ENCODE measurements at regions of chr5 and their contacts with region 1.

Region 1: DNA sequence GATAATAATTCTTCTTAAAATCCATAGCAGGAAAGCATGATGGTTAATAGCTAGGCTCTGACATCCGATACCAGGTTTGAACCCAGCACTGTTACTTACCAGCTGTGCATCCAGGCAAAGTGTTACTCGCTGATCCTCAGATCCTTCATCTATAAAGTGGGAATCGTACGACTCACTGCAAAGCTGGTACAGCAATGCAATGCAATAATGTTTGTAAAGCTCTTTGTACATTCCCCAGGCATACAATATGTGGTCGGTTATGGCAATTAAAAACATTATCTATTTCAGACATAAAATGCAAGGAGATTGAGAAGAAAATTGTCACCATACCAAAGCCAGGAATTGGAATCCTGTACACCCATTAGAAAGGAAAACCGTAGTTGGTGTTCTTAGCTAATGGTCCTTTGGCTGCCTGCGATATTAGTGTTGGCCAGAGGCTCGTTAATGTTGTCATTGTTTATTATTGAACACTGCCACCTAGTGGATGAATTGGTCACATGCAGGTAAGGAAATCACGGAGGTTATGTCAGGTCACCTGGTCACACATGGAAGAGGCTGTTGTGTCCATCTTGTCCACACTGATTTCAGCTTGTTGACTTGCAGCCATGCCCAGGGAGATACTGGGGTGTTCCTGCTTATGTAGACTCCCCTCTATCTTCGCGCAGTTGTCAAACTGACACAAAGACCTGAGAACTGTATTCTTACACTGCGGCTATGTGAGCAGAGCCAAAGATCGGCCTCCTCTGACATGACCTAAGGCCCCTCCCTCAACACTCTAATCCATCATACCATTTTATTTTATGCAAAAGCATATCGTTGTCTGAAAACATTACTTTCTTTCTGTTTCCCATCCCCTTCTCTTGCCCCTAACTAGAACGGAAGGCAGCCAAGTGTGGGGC is 87.5 kb upstream of the PPP2R2B start:
- DNase-seq: peak; percentile 65
- H3K4me3 Mint-ChIP-seq: no peak overlapping the region
- H3K27ac Mint-ChIP-seq: no peak overlapping the region
- H3K4me1 Mint-ChIP-seq: peaks cover 3% of the 10 kb centered on the region
- H3K27me3 Mint-ChIP-seq: no peaks in the 10 kb centered on the region

Region 2: DNA sequence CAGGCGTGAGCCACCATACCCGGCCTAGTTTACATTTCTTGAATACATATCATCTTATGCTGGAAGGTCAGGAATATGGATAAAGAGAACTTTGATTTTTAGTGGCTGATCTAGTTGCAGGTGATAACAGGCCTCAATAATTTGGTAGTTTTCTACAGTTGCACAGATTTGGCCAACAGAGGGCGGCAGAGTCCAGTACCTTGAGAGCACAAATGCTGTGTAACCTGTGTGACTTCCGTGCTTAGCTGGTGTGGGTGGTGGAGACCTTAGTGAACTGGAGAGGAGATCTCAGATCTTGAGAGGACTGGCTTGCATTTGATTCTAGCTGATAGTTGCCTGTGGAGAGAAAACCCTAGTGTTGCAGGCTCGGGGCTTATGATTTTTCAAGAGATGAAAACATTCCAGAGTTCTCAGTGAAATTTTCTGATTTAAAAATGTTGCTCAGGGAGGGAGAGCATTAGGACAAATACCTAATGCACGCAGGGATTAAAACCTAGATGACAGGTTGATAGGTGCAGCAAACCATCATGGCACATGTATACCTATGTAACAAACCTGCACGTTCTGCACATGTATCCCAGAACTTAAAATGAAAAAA is 432.7 kb before region 1 on chr5:
- CTCF ChIA-PET with region 1: interaction called, 58 read pairs
- intact Hi-C with region 1: loop called (anchors 1 kb)
- DNase-seq: peak; percentile 90
- H3K4me3 Mint-ChIP-seq: no peak overlapping the region
- H3K27ac Mint-ChIP-seq: no peak overlapping the region
- H3K4me1 Mint-ChIP-seq: peaks cover 3% of the 10 kb centered on the region
- H3K27me3 Mint-ChIP-seq: no peaks in the 10 kb centered on the region

Region 3: GRCh38 chr5:146541958-146542849 is 423.8 kb before region 1 on chr5:
- CTCF ChIA-PET with region 1: interaction called, 58 read pairs
- intact Hi-C with region 1: loop called (anchors 1 kb)
- DNase-seq: peak; percentile 81
- H3K4me3 Mint-ChIP-seq: no peak overlapping the region
- H3K27ac Mint-ChIP-seq: no peak overlapping the region
- H3K4me1 Mint-ChIP-seq: no peaks in the 10 kb centered on the region
- H3K27me3 Mint-ChIP-seq: no peaks in the 10 kb centered on the region

Region 4: GRCh38 chr5:146565764-146566367 is 400.1 kb before region 1 on chr5:
- CTCF ChIA-PET with region 1: interaction called, 20 read pairs
- intact Hi-C with region 1: loop called (anchors 1 kb)
- DNase-seq: peak; percentile 73
- H3K4me3 Mint-ChIP-seq: no peak overlapping the region
- H3K27ac Mint-ChIP-seq: no peak overlapping the region
- H3K4me1 Mint-ChIP-seq: peaks cover 4% of the 10 kb centered on the region
- H3K27me3 Mint-ChIP-seq: no peaks in the 10 kb centered on the region

Region 5: DNA sequence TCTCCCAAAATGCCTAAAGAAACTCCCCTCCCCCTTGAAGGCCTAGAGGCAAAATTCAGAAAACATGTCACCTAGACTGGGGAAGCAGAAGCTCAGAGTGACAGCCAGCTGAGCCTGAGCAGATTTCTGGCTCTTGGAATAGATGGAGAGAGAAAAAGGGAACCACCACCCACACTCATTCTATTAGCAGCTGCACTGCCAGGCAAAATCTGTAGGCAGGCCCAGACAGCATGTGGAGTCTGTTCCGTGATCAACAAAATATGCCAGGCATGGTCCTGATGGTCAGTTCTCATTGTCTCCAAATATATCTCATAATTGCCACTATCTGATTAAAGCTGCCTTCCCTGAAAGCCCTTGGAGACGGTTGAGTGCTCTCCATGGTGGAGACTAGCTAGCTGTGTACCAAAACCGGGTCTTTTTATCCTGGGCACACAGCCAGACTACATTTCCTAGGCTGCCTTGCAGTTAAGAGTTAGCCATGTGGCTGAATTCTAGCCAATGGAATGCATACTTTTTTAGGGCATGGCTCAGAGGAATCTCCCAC is 318.3 kb before region 1 on chr5:
- CTCF ChIA-PET with region 1: no interaction called
- intact Hi-C with region 1: loop called (anchors 5 kb)
- DNase-seq: no peak
- H3K4me3 Mint-ChIP-seq: no peak overlapping the region
- H3K27ac Mint-ChIP-seq: no peak overlapping the region
- H3K4me1 Mint-ChIP-seq: no peaks in the 10 kb centered on the region
- H3K27me3 Mint-ChIP-seq: no peaks in the 10 kb centered on the region

Region 6: DNA sequence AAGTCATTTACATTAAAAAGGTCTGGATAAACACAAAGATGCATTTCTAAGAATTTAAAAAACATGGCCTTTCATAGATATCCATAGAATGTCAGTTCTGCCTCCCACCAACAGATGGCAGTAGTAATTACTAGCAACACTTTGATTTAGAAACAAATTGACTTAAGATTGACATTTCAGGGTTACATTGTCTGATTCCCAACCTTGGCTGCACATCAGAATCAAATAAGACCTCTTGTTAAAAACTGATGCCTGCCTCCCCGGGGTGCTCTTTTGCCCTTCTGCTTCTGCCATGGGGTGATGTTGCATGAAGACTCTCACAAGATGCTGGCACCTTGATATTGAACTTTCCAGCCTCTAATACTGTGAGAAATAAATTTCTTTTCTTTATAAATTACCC is 303.8 kb before region 1 on chr5:
- CTCF ChIA-PET with region 1: interaction called, 43 read pairs
- intact Hi-C with region 1: loop called (anchors 1 kb)
- DNase-seq: no peak
- H3K4me3 Mint-ChIP-seq: no peak overlapping the region
- H3K27ac Mint-ChIP-seq: no peak overlapping the region
- H3K4me1 Mint-ChIP-seq: peaks cover 9% of the 10 kb centered on the region
- H3K27me3 Mint-ChIP-seq: no peaks in the 10 kb centered on the region

Region 7: DNA sequence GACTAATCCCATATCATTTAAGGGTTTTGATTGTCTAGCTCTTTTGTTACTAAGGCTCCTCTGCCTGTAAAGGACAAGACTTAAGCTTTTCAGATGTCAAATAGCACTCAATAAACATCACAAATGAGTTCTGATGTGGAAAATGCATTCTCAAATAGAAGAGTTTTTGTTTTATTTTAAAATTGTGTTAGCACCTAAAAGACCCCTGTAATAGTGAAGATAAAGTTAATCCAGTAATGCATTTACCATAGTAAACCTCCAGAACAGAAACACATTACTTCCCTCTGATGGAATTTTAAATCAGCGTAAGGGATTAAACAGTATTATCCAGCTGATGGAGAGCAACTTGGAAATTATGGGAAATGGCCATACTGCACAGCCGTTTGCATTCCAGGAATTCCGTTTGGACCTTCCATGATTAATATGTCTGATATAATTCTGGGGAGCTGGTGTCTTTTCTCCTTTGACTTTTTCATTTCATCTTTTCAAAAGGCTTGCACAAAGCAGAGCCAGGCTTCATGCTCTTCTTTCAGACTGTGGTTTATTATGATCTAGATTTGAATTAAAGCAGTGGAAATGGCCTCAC is 193.0 kb before region 1 on chr5:
- CTCF ChIA-PET with region 1: no interaction called
- intact Hi-C with region 1: no loop called
- DNase-seq: no peak
- H3K4me3 Mint-ChIP-seq: no peak overlapping the region
- H3K27ac Mint-ChIP-seq: no peak overlapping the region
- H3K4me1 Mint-ChIP-seq: no peaks in the 10 kb centered on the region
- H3K27me3 Mint-ChIP-seq: no peaks in the 10 kb centered on the region

Region 8: GRCh38 chr5:146818822-146819221 is 147.2 kb before region 1 on chr5:
- CTCF ChIA-PET with region 1: no interaction called
- intact Hi-C with region 1: loop called (anchors 2 kb)
- DNase-seq: no peak
- H3K4me3 Mint-ChIP-seq: no peak overlapping the region
- H3K27ac Mint-ChIP-seq: no peak overlapping the region
- H3K4me1 Mint-ChIP-seq: peaks cover 1% of the 10 kb centered on the region
- H3K27me3 Mint-ChIP-seq: no peaks in the 10 kb centered on the region

Region 9: DNA sequence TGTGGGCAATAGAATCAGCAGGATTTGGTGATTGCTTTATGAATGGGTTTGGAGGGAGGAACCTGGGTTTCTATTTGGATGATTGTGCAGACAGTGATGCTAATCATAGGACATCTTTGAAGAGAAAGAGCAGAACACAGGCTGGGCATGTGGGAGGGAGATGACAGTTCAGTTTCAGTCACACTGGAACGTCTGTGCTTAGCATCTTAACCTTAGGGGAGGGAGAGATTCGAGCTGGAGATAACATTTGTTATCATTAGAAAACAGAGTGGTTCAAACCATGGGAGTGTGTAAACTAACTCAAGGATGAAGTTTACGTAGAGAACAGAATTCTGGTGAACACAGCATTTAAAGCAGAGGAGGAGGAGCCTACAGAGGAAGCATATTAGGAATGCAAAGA is 51.2 kb after region 1 on chr5:
- CTCF ChIA-PET with region 1: no interaction called
- intact Hi-C with region 1: no loop called
- DNase-seq: no peak
- H3K4me3 Mint-ChIP-seq: no peak overlapping the region
- H3K27ac Mint-ChIP-seq: no peak overlapping the region
- H3K4me1 Mint-ChIP-seq: no peaks in the 10 kb centered on the region
- H3K27me3 Mint-ChIP-seq: peaks cover 6% of the 10 kb centered on the region